HCT116 (cell line): ENCODE measurements at regions of chr2 and their contacts with region 1.

Region 1: DNA sequence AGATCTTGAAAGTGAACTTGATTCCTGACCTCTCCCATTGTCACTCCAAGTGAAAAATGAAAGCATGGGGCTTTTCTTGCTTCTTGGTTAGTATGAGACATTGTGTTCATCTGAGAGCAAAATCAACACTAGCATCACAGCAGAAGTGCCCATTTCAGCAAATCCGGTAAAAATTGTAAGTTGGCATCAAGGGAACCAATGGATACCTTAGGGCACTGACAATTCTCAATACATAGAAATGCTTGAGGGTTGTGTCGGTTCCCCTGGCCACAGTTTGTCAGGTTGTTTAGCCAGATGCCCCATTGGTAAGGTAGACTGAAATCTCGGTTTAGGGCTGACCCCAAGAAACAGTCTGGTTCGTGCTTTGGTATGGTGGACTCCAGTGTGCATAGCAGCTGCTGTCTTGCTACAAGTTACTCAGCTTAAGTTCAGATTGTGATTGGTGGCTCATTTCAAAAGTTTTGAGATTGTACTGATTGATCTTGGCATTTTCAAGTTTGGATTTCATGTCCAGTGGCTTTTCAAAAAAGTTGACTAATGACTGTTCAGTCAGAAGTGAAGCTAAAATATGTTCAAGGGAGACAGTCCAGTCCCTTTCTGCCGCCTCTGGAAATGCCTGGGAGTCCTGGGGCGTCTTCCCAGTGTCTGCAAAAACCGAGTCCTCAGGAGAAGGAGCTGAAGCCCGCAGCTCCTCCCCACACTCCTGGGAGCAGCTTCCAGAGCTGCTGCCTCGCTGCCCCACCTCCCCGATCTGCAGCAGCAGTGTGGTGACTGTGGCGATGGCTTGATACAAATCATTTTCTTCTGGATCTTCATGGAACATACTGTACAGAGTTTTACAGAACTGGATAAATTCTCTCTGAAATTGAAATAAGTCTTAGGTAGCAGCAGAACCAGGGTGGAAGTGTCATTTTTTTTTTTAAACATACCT is 5.6 kb downstream of the RPL31 start:
- DNase-seq: no peak
- ATAC-seq: peak; percentile 48
- H3K4me3 ChIP-seq: no peak overlapping the region
- H3K27ac ChIP-seq: peak overlapping the region; percentile 20; the same call in 1 of the 2 replicates
- H3K4me1 ChIP-seq: peaks cover 2 to 11% of the 10 kb centered on the region in 2 experiments; a peak in 3 of 4 replicates
- H3K27me3 ChIP-seq: no peaks in the 10 kb centered on the region
- CTCF ChIP-seq: no peak
- POLR2A ChIP-seq: no peak
- RAD21 ChIP-seq: no peak

Region 2: GRCh38 chr2:100992262-100992661 is 15.4 kb before region 1 on chr2:
- CTCF ChIA-PET with region 1: no interaction called
- POLR2A ChIA-PET with region 1: no interaction called
- RAD21 ChIA-PET with region 1: no interaction called
- intact Hi-C with region 1: no loop called
- DNase-seq: no peak
- ATAC-seq: no peak
- H3K4me3 ChIP-seq: no peak overlapping the region
- H3K27ac ChIP-seq: no peak overlapping the region
- H3K4me1 ChIP-seq: no peaks in the 10 kb centered on the region
- H3K27me3 ChIP-seq: no peaks in the 10 kb centered on the region
- CTCF ChIP-seq: no peak
- POLR2A ChIP-seq: no peak
- RAD21 ChIP-seq: no peak

Region 3: GRCh38 chr2:101151141-101151858 is 143.6 kb after region 1 on chr2 and contains the start of gene TBC1D8:
- CTCF ChIA-PET with region 1: interaction called, 14 read pairs
- POLR2A ChIA-PET with region 1: no interaction called
- RAD21 ChIA-PET with region 1: interaction called, 3 to 4 read pairs
- intact Hi-C with region 1: no loop called
- DNase-seq: peak; percentile 49
- ATAC-seq: peak; percentile 91
- H3K4me3 ChIP-seq: peak within 1 kb of the TSS; percentile 72 to 80
- H3K27ac ChIP-seq: peak within 1 kb of the TSS; percentile 81; the same call in 1 of the 2 replicates
- H3K4me1 ChIP-seq: peaks cover 23 to 57% of the 10 kb centered on the region in 2 experiments
- H3K27me3 ChIP-seq: no peaks in the 10 kb centered on the region
- CTCF ChIP-seq: no peak
- POLR2A ChIP-seq: peak; percentile 81
- RAD21 ChIP-seq: 0 out of 2 replicates have a peak, but pooled peaks have one; percentile 3
- total RNA-seq, gene TBC1D8: 44.0 TPM